GM12878 (cell line): ENCODE measurements at regions of chr11 and their contacts with region 1.

Region 1: GRCh38 chr11:116879800-116880625 is 42.6 kb upstream of the APOA1 start:
- DNase-seq: peak; percentile 42
- ATAC-seq: peak; percentile 96
- H3K4me3 ChIP-seq: no peak overlapping the region
- H3K27ac ChIP-seq: no peak overlapping the region
- H3K4me1 ChIP-seq: no peaks in the 10 kb centered on the region
- H3K27me3 ChIP-seq: no peaks in the 10 kb centered on the region
- CTCF ChIP-seq: peak; percentile 62 to 72 (median 71); a peak in 5 of 6 replicates
- EP300 ChIP-seq: no peak
- POLR2A ChIP-seq: no peak
- RAD21 ChIP-seq: peak; percentile 87

Region 2: DNA sequence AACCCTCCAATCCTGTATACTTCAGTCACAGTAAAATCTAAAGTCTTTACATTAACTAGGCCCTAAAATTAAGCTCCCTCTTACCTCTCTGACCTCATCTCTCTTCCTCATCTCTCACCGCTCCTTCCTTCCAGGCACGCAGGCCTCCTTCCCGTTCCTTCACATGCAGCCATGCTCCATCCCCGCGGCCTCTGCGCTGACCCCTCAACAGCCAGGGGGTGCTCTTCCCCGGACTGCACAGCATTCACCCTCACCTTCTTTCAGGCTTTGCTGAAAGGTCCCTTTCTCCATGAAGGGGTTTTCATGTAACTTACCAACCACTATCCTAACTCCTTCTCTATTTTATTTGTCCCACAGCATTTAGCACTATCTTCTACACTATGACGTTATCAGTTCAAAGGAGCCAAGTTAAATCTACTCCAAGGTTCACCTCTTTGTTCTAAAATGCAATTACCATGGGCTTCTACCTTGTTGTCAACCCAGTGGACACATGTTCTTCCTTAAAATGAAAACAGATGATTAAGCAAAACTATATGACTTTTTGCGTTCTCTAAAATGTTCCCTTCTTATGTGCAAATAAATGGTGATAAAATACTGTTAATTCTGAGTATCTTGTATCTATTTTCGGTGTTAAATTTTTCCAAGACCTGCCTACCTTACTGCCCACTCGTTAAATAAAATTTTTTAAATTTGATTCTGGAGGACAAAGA is 15.2 kb after region 1 on chr11:
- CTCF ChIA-PET with region 1: interaction called, 11 read pairs
- POLR2A ChIA-PET with region 1: no interaction called
- RAD21 ChIA-PET with region 1: no interaction called
- SMC1A ChIA-PET with region 1: interaction called, 5 read pairs
- in situ Hi-C with region 1: no loop called
- intact Hi-C with region 1: no loop called
- DNase-seq: no peak
- ATAC-seq: no peak
- H3K4me3 ChIP-seq: no peak overlapping the region
- H3K27ac ChIP-seq: no peak overlapping the region
- H3K4me1 ChIP-seq: 0 out of 2 replicates have a peak, but pooled peaks cover 3% of the 10 kb centered on the region
- H3K27me3 ChIP-seq: no peaks in the 10 kb centered on the region
- CTCF ChIP-seq: peak in 2 of 3 experiments; percentile 4 to 34; a peak in 2 of 6 replicates
- EP300 ChIP-seq: no peak
- POLR2A ChIP-seq: no peak
- RAD21 ChIP-seq: peak; percentile 51